Transverse colon (tissue), 4 donors: ENCODE measurements at regions of chrX and their contacts with region 1.

Region 1: GRCh38 chrX:117487421-117487820 is 629.2 kb downstream of the KLHL13 start:
- DNase-seq: no peak
- H3K4me3 ChIP-seq: no peak overlapping the region
- H3K27ac ChIP-seq: no peak overlapping the region
- H3K4me1 ChIP-seq: no peaks in the 10 kb centered on the region
- H3K27me3 ChIP-seq: no peaks in the 10 kb centered on the region
- CTCF ChIP-seq: no peak
- EP300 ChIP-seq: no peak
- POLR2A ChIP-seq: no peak

Region 2: GRCh38 chrX:117008305-117008704 is 479.1 kb before region 1 on chrX:
- in situ Hi-C with region 1: no loop called
- intact Hi-C with region 1: no loop called
- DNase-seq: no peak
- H3K4me3 ChIP-seq: no peak overlapping the region
- H3K27ac ChIP-seq: no peak overlapping the region
- H3K4me1 ChIP-seq: no peaks in the 10 kb centered on the region
- H3K27me3 ChIP-seq: no peaks in the 10 kb centered on the region
- CTCF ChIP-seq: no peak
- EP300 ChIP-seq: no peak
- POLR2A ChIP-seq: no peak

Region 3: GRCh38 chrX:117570160-117570559 is 82.7 kb after region 1 on chrX:
- in situ Hi-C with region 1: loop called in 1 of 4 experiments (anchors 25 kb)
- intact Hi-C with region 1: no loop called
- DNase-seq: no peak
- H3K4me3 ChIP-seq: no peak overlapping the region
- H3K27ac ChIP-seq: no peak overlapping the region
- H3K4me1 ChIP-seq: no peaks in the 10 kb centered on the region
- H3K27me3 ChIP-seq: no peaks in the 10 kb centered on the region
- CTCF ChIP-seq: no peak
- EP300 ChIP-seq: no peak
- POLR2A ChIP-seq: no peak